Kidney (tissue), 22 donors: ENCODE measurements at regions of chr2 and their contacts with region 1.

Region 1: DNA sequence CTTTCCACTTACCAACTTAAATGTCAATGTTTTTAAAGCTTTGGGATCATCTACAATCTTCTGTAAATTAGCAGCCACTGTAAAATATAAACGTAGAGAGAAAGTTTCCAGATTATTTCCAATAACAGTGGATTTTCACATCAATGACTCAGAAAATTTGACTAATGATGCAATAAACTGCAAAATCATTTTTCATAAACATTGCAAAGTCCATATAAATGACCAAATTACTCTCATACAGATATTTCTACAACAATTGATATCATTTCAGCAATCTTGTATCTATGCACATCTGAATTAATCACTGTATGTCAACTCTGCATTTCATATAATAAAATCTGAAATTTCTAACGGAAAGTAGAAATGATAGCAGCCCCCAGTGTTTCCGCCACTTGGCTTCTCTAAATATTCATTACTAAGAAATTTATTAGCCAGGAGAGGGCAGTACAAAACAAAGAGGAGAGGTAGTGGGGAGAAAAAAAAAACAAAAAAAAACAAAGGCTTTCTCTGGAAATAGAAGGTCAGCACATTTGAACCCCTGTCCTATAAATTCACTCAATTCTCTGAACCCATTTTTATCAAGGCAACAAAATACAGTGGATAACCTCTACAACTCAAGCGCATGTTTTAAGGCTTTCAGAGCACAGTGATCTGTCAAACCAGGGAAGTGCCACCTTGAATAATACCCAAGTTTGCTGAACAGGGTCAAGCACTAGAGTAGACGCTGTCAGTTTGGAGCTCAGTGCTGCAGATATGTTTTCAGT is 282.6 kb downstream of the STK39 start:
- DNase-seq: peak in 3 of 5 donors; percentile 22 to 71 (median 67)
- H3K4me3 ChIP-seq: no peak overlapping the region
- H3K27ac ChIP-seq: no peak overlapping the region
- H3K4me1 ChIP-seq: peaks cover 0 to 3% (median 0%) of the 10 kb centered on the region in 3 donors
- H3K27me3 ChIP-seq: no peaks in the 10 kb centered on the region
- CTCF ChIP-seq: peak; percentile 23

Region 2: DNA sequence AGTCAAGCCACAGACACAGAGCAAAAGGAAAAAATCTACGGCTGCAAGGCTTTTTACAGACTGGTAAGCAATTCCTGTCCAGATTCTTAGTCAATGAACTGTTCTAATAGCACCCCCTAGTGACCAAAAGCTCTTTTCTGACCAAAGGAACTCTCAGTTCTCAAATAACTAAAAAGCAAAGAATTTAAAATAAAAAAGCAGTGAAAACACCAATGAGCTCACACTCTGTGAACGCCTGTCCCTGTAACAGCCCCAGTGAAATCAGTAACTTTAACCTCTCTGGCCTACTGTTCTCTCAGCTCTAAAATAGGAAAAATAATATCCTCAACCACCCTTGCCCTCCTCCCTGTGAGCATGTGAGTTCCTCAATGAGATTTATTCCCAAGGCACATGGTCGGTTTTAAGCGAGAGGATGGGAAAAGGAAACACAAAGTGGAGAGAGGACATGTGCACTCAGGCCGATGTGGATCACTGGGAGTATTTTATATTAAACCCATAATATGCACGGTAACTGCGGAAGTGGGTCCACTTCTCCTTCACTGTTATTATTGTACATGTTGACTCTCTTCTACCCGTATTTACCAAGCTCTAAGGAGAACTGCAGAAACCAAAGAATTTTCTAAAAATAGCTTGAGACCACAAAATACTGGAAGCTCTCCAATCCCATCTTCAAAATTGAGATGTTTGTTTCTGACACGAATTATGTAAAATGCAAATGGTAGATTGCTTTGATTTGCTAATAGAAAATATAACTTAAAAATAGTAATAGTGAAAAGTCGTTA is 154.1 kb after region 1 on chr2:
- intact Hi-C with region 1: loop called (anchors 10 kb)
- DNase-seq: peak in 4 of 5 donors; percentile 33 to 93 (median 68)
- H3K4me3 ChIP-seq: no peak overlapping the region
- H3K27ac ChIP-seq: peak overlapping the region in 1 of 2 donors; percentile 33
- H3K4me1 ChIP-seq: no peaks in the 10 kb centered on the region
- H3K27me3 ChIP-seq: no peaks in the 10 kb centered on the region
- CTCF ChIP-seq: peak; percentile 61